ENCODE measurements at regions of chr11 and their contacts with region 1.

Region 1: DNA sequence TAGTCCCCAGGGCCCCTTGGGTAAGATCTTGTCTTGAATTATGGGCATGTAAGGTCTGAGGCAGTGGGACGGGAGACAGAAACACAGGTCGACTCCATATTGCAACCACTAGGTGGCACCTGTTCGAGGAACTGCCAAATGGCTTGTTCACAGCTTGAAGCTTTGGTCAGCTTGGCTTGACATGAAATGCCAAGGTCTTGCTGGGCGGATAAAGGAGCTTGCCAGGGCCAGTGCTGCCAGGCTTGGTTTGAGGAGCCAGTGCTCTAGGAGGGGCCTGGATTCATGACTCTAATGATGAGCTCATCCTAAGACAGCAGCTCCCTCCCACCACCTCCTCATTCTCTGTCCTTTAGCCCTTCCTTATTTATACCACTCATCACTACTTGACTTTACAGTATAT is 11.9 kb upstream of the NRIP3 start:
- DNase-seq: no peak
- ATAC-seq: peak; percentile 69
- H3K4me3 Mint-ChIP-seq: no peak overlapping the region
- H3K27ac Mint-ChIP-seq: no peak overlapping the region
- H3K4me1 Mint-ChIP-seq: no peaks in the 10 kb centered on the region
- H3K27me3 Mint-ChIP-seq: peaks cover 7% of the 10 kb centered on the region
- CTCF ChIP-seq: peak; percentile 26

Region 2: GRCh38 chr11:9137293-9138132 is 121.8 kb after region 1 on chr11:
- CTCF ChIA-PET with region 1: interaction called, 68 read pairs
- POLR2A ChIA-PET with region 1: no interaction called
- intact Hi-C with region 1: no loop called
- DNase-seq: peak; percentile 60
- ATAC-seq: peak; percentile 99
- H3K4me3 Mint-ChIP-seq: no peak overlapping the region
- H3K27ac Mint-ChIP-seq: no peak overlapping the region
- H3K4me1 Mint-ChIP-seq: peaks cover 3% of the 10 kb centered on the region
- H3K27me3 Mint-ChIP-seq: no peaks in the 10 kb centered on the region
- CTCF ChIP-seq: peak; percentile 50

Region 3: DNA sequence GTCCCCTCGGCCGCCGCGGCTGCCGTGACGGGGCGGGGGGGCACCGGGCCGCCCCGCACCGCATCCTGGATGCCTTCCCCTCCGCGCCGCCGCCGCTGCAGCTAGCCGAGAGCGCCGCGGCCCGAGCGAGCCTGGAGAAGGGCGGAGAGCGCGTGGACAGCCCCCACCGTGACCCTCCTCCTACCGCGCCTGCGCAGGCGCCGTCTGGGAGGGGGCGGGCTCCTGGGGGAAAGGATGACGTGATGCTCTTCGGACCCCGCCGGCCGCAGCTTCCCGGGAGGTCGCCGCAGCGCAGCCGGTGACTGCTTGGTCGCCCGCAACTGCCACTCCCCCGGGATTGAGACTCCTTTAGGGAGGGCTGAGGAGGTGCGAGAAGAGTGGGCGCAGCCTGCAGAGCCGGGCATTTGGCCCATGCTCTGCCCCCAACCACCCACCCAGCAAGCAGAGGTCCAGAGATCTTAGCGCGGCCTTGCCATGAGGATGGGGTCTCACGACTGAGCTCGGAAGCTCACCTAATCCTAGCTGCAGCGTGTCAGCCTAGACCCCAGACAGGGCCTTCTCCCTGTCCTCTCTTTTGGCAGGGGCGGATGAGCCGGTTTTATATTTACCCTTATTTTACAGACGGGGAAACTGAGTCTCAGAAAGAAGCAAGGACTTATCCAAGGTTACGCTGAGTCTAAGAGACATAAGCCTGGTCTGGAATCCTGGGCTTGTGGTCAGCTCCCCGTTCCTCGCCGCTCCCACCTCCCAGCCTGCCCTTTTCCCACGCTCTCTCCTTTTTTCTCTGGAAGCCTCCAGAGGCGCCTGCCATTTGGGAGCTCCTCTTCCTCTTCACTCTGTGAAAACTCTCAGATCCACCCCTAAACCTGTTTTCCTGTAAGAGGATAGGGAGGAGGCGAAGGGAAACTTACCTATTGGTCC is 249.8 kb after region 1 on chr11 and contains the start of gene DENND5A:
- CTCF ChIA-PET with region 1: no interaction called
- POLR2A ChIA-PET with region 1: no interaction called
- intact Hi-C with region 1: no loop called
- DNase-seq: peak; percentile 54
- ATAC-seq: peak; percentile 61
- H3K4me3 Mint-ChIP-seq: peak within 1 kb of the TSS; percentile 94
- H3K27ac Mint-ChIP-seq: peak within 1 kb of the TSS; percentile 93
- H3K4me1 Mint-ChIP-seq: peaks cover 37% of the 10 kb centered on the region
- H3K27me3 Mint-ChIP-seq: no peaks in the 10 kb centered on the region
- CTCF ChIP-seq: no peak
- total RNA-seq, gene DENND5A: 23.2 and 24.4 TPM in 2 replicates